ENCODE measurements at regions of chr3 and their contacts with region 1.

Region 1: DNA sequence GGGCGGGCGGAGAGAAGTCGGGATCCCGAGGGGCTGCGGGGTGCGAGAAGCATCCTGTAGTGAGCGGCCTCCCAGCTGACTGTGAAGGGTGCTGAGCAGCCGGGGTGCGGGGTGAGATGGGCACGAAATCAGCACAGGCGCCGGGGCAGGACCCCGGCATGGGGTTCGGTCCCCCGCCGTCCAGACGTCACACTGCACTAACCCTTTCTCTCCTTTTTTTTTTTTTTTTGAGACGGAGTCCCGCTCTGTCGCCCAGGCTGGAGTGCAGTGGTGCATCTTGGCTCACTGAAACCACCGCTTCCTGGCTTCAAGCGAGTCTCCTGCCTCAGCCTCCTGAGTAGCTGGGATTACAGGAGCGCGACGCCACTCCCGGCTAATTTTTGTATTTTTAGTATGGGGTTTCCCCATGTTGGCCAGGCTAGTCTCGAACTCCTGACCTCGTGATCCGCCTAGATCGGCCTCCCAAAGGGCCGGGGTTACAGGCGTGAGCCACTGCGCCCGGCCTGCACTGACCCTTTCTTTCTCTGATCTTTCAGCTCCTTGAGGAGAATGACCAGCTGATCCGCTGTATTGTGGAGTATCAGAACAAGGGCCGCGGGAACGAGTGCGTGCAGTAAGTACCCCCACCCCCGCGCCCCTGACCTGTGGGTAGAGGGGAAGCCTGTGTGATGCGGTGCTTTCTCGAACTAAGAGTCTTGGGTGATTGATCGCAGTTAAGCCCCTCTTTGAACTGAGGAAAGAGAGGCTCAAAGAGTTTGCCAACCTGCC is 513 bp downstream of the SS18L2 start:
- DNase-seq: no peak
- H3K4me3 ChIP-seq: peak overlapping the region; percentile 65
- H3K27ac ChIP-seq: peak overlapping the region; percentile 26
- H3K4me1 ChIP-seq: peaks cover 21% of the 10 kb centered on the region
- H3K27me3 ChIP-seq: no peaks in the 10 kb centered on the region
- CTCF ChIP-seq: no peak

Region 2: GRCh38 chr3:41961750-41962679 is 629.2 kb before region 1 on chr3 and contains the start of gene ULK4:
- CTCF ChIA-PET with region 1: no interaction called
- POLR2A ChIA-PET with region 1: interaction called, 15 read pairs
- intact Hi-C with region 1: no loop called
- DNase-seq: peak; percentile 97
- H3K4me3 ChIP-seq: peak within 1 kb of the TSS; percentile 93
- H3K27ac ChIP-seq: peak within 1 kb of the TSS; percentile 18; the same call in 1 of the 2 replicates
- H3K4me1 ChIP-seq: 0 out of 2 replicates have a peak, but pooled peaks cover 14% of the 10 kb centered on the region
- H3K27me3 ChIP-seq: no peaks in the 10 kb centered on the region
- CTCF ChIP-seq: no peak
- total RNA-seq, gene ULK4: 5.9 and 8.7 TPM in 2 replicates

Region 3: DNA sequence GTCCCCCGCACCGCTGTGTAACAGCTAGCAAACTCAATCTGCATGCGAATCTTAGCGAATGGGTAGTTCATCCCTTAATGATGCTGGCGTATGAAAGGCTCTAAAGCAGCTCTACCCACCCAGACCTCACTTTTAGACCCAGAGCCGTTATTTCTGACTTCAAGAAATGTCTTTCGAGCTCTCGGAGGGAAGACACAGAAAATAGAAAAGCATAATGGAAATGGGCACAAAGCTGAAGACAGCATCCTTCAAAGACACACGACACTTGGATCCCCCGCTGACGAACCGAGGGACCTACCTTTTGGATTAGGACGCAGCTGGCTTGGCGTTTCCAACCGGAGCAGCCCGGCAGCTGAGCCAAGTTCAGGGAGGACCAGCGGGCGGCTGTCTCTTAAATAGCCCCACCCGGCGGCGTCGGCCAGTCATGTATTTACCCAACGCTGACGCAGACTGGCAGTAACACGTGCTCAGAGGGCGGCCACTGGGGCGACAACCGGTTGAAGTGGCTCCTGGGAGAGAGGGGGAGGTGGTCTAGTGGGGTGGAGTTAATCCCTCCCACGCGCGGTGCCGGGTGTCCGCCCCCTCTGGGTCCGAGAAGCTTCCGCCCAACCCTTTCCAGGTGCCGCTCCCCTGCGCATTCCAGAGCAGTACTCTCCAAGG is 326.6 kb before region 1 on chr3:
- CTCF ChIA-PET with region 1: no interaction called
- POLR2A ChIA-PET with region 1: no interaction called
- intact Hi-C with region 1: no loop called
- DNase-seq: peak in 1 of 2 experiments; percentile 42
- H3K4me3 ChIP-seq: peak overlapping the region; percentile 55; the same call in 1 of the 2 replicates
- H3K27ac ChIP-seq: no peak overlapping the region
- H3K4me1 ChIP-seq: peaks cover 30% of the 10 kb centered on the region
- H3K27me3 ChIP-seq: peaks cover 4% of the 10 kb centered on the region
- CTCF ChIP-seq: no peak

Measured in PC-9 (cell line).